ENCODE measurements at regions of chr20 and their contacts with region 1.

Region 1: DNA sequence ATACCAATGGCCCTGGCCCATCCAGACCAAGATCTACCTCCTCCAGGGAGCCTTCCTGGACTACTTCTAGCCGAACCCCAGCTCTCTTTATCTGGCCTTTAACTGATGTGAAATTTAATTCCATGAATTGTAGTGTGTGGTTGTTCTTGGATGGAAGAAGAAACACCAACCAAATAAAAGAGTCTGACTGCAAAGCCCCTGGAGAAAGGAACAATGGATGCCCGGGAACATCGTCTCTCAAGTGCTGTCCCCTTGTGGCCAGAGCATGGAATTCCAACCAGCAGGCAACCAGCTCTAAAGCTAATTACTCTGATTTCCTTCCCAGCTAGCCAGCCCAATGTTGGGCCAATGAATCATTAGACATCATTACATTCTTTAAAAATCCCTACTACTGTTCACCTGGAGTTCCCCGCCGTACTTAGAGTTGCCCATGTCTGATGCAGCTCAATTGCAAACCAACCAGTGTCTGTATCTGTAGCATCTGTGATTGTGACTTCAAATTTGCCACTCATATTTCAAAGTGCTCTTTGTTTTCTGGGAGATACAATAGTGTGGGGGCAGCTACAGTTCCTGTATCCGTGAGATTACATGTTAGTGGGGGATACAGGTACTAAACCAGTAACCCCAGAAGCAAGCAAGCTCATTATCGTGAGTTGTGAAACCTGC is 141.1 kb downstream of the ANKRD60 start:
- DNase-seq: peak; percentile 24 to 52 (median 48)
- H3K4me3 ChIP-seq: no peak overlapping the region
- H3K27ac ChIP-seq: no peak overlapping the region
- H3K4me1 ChIP-seq: no peaks in the 10 kb centered on the region
- H3K27me3 ChIP-seq: peaks cover 0 to 4% (median 0%) of the 10 kb centered on the region in 5 experiments

Region 2: GRCh38 chr20:57622579-57623377 is 464.5 kb before region 1 on chr20:
- CTCF ChIA-PET with region 1: interaction called, 16 read pairs
- POLR2A ChIA-PET with region 1: no interaction called
- DNase-seq: peak; percentile 49 to 57 (median 55)
- H3K4me3 ChIP-seq: no peak overlapping the region
- H3K27ac ChIP-seq: no peak overlapping the region
- H3K4me1 ChIP-seq: peaks cover 11 to 57% (median 49%) of the 10 kb centered on the region in 4 experiments
- H3K27me3 ChIP-seq: no peaks in the 10 kb centered on the region

Region 3: DNA sequence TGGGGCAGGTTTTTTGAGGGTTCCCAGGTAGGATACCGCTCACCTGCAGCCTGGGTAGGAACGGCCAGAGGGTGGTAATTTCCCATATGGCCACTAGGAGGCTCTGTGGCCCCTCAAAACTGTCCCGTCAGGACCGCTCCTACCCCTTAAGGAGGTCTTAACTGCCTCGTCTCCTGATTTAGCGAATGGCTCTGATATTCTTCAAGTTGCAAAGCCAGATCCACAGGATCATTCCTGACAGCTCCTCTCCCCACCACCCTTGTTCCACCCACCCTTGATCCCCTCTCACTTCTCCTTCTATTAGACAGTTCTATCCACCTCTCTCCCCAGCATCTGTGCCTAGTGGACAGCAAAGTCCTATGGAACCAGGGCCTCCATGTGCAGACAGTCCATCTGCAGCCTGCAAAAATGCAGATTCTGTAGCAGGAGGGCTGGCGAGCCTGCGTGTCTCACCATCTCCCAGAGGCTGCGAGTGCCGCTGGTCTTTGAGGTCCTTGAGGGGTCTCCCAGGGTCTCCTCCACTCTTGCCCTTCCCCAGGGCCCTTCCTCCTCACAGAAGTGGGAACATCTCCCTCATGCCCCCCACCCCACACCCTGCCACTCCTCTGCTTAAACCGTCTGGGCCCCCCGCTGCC is 432.8 kb before region 1 on chr20:
- CTCF ChIA-PET with region 1: interaction called, 20 read pairs
- POLR2A ChIA-PET with region 1: no interaction called
- DNase-seq: peak; percentile 60 to 74 (median 69)
- H3K4me3 ChIP-seq: no peak overlapping the region
- H3K27ac ChIP-seq: no peak overlapping the region
- H3K4me1 ChIP-seq: no peaks in the 10 kb centered on the region
- H3K27me3 ChIP-seq: peaks cover 0 to 4% (median 0%) of the 10 kb centered on the region in 5 experiments

Region 4: GRCh38 chr20:57709931-57710799 is 377.2 kb before region 1 on chr20 and contains the start of gene PMEPA1:
- CTCF ChIA-PET with region 1: interaction called, 12 read pairs
- POLR2A ChIA-PET with region 1: no interaction called
- DNase-seq: peak; percentile 94 to 97 (median 96)
- H3K4me3 ChIP-seq: peak within 1 kb of the TSS; percentile 71 to 96 (median 85)
- H3K27ac ChIP-seq: peak within 1 kb of the TSS in 1 of 2 experiments; percentile 34
- H3K4me1 ChIP-seq: peaks cover 6 to 30% (median 20%) of the 10 kb centered on the region in 4 experiments
- H3K27me3 ChIP-seq: peaks cover 0 to 14% (median 2%) of the 10 kb centered on the region in 5 experiments

Region 5: GRCh38 chr20:58073945-58074856 is 13.1 kb before region 1 on chr20:
- CTCF ChIA-PET with region 1: interaction called, 13 read pairs
- POLR2A ChIA-PET with region 1: no interaction called
- DNase-seq: no peak
- H3K4me3 ChIP-seq: peak overlapping the region in 2 of 7 experiments; percentile 28 to 53
- H3K27ac ChIP-seq: no peak overlapping the region
- H3K4me1 ChIP-seq: peaks cover 0 to 14% (median 6%) of the 10 kb centered on the region in 4 experiments
- H3K27me3 ChIP-seq: peaks cover 0 to 4% (median 0%) of the 10 kb centered on the region in 5 experiments

Region 6: DNA sequence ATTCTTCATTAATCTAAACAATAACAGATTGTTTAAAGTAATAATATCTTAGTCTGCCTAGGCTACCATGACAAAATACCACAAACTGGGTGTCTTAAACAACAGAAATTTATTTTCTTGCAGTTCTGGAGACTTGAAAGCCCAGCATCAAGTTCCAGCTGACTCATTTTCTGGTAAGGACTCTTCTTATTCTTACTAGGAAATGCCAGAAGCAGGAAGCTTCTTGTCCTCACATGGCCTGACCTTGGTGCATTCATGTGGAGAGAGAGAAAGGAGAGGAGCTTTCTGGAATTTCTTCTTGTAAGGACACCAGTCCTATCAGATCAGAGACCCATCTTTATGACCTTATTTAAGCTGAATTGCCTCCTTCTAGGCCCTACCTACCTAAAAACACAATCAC is 30.6 kb after region 1 on chr20:
- CTCF ChIA-PET with region 1: no interaction called
- POLR2A ChIA-PET with region 1: no interaction called
- DNase-seq: no peak
- H3K4me3 ChIP-seq: no peak overlapping the region
- H3K27ac ChIP-seq: no peak overlapping the region
- H3K4me1 ChIP-seq: no peaks in the 10 kb centered on the region
- H3K27me3 ChIP-seq: peaks cover 0 to 18% (median 6%) of the 10 kb centered on the region in 5 experiments

Region 7: DNA sequence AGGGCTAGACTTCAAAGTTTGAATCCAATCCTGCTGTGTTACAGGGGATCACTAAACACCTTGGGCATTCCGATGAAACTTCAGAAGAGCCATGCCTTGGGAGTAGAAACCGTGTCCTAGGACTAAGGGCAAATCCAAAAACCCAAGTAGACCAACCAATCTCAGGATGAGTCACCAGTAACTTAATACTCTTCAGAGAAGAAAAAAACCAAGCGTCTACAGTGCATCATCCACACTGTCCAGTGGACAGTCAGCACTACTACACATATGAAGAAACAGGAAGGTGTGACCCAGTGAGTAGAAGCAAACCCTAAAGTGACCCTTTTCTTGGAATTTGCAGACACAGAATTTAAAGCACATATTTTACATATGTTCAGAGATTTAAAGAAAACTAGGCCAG is 262.3 kb after region 1 on chr20:
- CTCF ChIA-PET with region 1: no interaction called
- POLR2A ChIA-PET with region 1: no interaction called
- DNase-seq: no peak
- H3K4me3 ChIP-seq: no peak overlapping the region
- H3K27ac ChIP-seq: no peak overlapping the region
- H3K4me1 ChIP-seq: no peaks in the 10 kb centered on the region
- H3K27me3 ChIP-seq: no peaks in the 10 kb centered on the region

Region 8: DNA sequence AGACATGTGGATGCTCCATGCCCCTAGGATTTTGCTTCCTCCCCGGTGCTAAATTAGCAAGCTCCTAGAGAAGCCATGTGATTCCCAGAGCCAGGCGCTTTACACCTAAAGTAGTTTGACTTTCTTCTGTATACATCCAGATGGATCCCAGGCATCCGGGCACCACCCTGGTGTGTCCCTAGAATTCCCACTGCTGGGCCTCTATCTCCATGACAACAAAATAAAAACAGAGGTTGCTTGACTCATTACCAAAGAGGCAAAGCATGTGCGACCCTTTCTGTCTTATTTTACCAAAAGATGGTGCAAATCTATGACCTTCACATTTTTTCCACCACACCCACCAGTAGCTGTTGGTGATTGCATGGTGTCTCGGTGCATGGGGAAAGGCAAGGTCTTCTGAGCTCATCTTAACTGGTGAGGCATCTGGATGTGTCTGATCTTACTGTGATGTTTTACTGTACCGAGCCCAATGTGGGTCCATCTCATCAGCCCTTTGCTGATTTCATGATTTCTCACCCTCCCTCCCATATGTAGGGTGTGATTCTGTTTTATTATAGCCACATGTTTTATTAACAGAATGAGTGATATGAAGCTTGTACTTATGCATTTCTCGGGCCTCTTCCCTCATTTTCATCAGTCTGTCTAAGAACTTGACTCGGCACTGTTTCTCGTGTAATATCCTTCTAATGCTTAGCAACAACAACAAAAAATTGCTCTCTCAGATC is 274.3 kb after region 1 on chr20:
- CTCF ChIA-PET with region 1: no interaction called
- POLR2A ChIA-PET with region 1: no interaction called
- DNase-seq: no peak
- H3K4me3 ChIP-seq: no peak overlapping the region
- H3K27ac ChIP-seq: no peak overlapping the region
- H3K4me1 ChIP-seq: no peaks in the 10 kb centered on the region
- H3K27me3 ChIP-seq: no peaks in the 10 kb centered on the region

Measured in common myeloid progenitor, CD34-positive (primary cell).